ENCODE measurements at regions of chr5 and their contacts with region 1.

Region 1: GRCh38 chr5:156312897-156313694 is 13.9 kb upstream of the SGCD start:
- DNase-seq: no peak
- ATAC-seq: no peak
- H3K4me3 ChIP-seq: no peak overlapping the region
- H3K27ac ChIP-seq: no peak overlapping the region
- H3K4me1 ChIP-seq: no peaks in the 10 kb centered on the region
- H3K27me3 ChIP-seq: no peaks in the 10 kb centered on the region
- CTCF ChIP-seq: no peak
- POLR2A ChIP-seq: no peak
- RAD21 ChIP-seq: no peak

Region 2: DNA sequence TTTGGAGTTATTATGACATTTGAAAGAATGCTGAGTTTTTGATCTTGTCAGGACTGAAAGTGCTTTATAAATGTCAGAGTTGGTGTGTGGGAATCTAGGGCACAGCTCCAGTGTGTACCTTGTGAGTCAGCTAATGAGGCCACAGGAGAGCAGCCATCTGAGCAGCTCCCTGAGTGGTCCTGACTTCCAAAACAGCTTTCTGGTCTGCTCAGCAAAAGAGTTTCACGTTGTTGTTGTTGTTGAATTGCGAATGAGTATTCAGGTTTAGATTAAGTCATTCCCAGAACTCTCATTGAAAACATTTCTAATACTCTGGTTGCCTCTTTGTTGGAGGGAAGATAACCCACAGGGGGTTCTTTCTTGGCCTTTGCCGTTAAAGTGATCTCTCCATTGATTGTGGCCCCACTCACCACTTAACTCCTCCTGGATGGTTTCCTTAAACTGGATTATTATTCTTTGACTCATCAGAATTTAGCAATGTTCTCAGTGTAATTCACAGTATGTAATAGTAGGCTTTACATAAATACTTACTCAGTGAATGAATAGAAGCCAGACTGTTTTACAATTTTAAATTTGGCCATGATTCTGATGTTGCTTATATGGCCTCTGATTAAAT is 111.2 kb before region 1 on chr5:
- CTCF ChIA-PET with region 1: no interaction called
- POLR2A ChIA-PET with region 1: no interaction called
- dilution Hi-C with region 1: no loop called
- in situ Hi-C with region 1: no loop called
- intact Hi-C with region 1: loop called (anchors 10 kb)
- DNase-seq: peak; percentile 83
- ATAC-seq: peak; percentile 97
- H3K4me3 ChIP-seq: no peak overlapping the region; the same call in 1 of the 2 replicates
- H3K27ac ChIP-seq: peak overlapping the region; percentile 85
- H3K4me1 ChIP-seq: peaks cover 7% of the 10 kb centered on the region
- H3K27me3 ChIP-seq: no peaks in the 10 kb centered on the region
- CTCF ChIP-seq: no peak
- POLR2A ChIP-seq: no peak
- RAD21 ChIP-seq: no peak

Measured in IMR-90 (cell line).